H1 (cell line): ENCODE measurements at regions of chr16 and their contacts with region 1.

Region 1: DNA sequence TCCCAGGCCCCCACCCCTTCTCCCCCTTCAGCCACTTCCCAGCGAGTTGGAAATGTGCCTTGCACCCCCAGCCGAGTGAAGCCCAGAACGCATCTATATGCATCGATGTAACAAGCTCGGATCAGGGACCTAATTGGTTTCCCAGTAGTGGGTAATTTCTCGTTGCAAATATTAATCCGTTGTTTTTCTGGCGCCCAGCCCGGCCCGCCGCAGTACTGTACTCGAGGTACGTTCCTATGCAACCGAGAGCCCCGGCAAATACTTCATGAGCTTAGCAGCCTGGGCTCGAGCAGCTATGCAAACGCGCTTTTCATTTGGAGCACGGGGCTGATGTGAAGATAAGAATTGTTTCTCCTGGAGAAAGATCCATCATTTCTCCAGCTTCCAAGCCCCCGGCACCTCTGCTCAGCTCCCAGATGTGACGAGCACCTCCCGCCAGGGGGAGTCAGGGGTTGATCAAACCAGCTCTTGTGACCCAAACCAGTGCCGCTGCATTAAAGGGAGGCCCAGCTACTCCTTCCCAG is 229.8 kb downstream of the KATNIP start:
- DNase-seq: peak; percentile 41 to 88
- H3K4me3 ChIP-seq: no peak overlapping the region
- H3K27ac ChIP-seq: no peak overlapping the region
- H3K4me1 ChIP-seq: 0 out of 7 replicates have a peak, but pooled peaks cover 0 to 5% (median under 1%) of the 10 kb centered on the region in 4 experiments
- H3K27me3 ChIP-seq: no peaks in the 10 kb centered on the region
- CTCF ChIP-seq: peak; percentile 70 to 88 (median 81)
- EP300 ChIP-seq: no peak
- POLR2A ChIP-seq: no peak
- RAD21 ChIP-seq: peak; percentile 76 to 84

Region 2: GRCh38 chr16:27582883-27583282 is 196.8 kb before region 1 on chr16:
- CTCF ChIA-PET with region 1: no interaction called
- POLR2A ChIA-PET with region 1: no interaction called
- DNase-seq: no peak
- H3K4me3 ChIP-seq: no peak overlapping the region
- H3K27ac ChIP-seq: no peak overlapping the region
- H3K4me1 ChIP-seq: 0 out of 7 replicates have a peak, but pooled peaks cover 0 to 2% (median 0%) of the 10 kb centered on the region in 4 experiments
- H3K27me3 ChIP-seq: no peaks in the 10 kb centered on the region
- CTCF ChIP-seq: no peak
- EP300 ChIP-seq: no peak
- POLR2A ChIP-seq: no peak
- RAD21 ChIP-seq: no peak

Region 3: GRCh38 chr16:27698266-27698665 is 81.4 kb before region 1 on chr16:
- CTCF ChIA-PET with region 1: interaction called, 17 read pairs
- POLR2A ChIA-PET with region 1: no interaction called
- DNase-seq: peak; percentile 70 to 95
- H3K4me3 ChIP-seq: no peak overlapping the region
- H3K27ac ChIP-seq: no peak overlapping the region
- H3K4me1 ChIP-seq: peaks cover 0 to 11% (median 2%) of the 10 kb centered on the region in 4 experiments; a peak in 4 of 7 replicates
- H3K27me3 ChIP-seq: no peaks in the 10 kb centered on the region
- CTCF ChIP-seq: peak; percentile 97 to 98 (median 97)
- EP300 ChIP-seq: no peak
- POLR2A ChIP-seq: no peak
- RAD21 ChIP-seq: peak; percentile 68 to 81

Region 4: DNA sequence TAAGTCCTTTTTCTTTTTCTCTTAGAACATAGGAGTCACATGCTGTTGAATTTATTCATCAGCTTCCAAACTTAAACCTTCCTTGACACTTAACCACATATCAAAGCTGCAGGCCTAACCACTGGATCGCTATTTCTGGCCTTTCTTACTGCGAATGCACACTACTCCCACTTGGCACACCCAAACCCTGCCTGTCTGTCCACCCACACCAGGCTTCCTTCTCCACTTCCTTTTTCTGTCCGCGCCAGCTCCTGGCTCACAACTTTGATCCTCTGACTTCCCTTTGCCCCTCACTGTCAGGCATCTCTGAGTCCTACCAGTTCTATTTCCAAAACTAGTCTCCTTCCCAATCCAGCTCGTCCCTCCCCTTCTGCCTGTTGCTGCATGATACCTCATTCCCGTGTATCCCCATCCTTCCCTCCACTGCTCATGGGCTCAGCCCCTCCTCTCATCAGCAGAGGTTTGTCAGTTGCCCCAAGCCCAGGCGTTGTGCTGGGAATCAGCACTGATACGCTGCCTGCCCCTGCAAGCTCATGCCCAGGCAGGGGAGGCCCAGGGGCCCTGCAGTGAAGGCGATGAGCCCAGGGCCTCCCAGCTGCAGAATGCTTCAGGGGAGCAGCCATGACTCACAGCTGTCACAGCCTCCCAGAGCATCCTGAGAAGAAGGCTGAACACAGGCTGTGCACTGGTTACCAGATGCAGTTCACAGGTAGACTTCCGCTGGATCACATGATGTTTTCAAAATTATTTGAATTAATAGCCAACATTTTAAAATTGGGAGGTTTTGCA is 50.0 kb before region 1 on chr16:
- CTCF ChIA-PET with region 1: no interaction called
- POLR2A ChIA-PET with region 1: no interaction called
- DNase-seq: no peak
- H3K4me3 ChIP-seq: no peak overlapping the region
- H3K27ac ChIP-seq: no peak overlapping the region
- H3K4me1 ChIP-seq: no peaks in the 10 kb centered on the region
- H3K27me3 ChIP-seq: no peaks in the 10 kb centered on the region
- CTCF ChIP-seq: no peak
- EP300 ChIP-seq: no peak
- POLR2A ChIP-seq: no peak
- RAD21 ChIP-seq: no peak

Region 5: DNA sequence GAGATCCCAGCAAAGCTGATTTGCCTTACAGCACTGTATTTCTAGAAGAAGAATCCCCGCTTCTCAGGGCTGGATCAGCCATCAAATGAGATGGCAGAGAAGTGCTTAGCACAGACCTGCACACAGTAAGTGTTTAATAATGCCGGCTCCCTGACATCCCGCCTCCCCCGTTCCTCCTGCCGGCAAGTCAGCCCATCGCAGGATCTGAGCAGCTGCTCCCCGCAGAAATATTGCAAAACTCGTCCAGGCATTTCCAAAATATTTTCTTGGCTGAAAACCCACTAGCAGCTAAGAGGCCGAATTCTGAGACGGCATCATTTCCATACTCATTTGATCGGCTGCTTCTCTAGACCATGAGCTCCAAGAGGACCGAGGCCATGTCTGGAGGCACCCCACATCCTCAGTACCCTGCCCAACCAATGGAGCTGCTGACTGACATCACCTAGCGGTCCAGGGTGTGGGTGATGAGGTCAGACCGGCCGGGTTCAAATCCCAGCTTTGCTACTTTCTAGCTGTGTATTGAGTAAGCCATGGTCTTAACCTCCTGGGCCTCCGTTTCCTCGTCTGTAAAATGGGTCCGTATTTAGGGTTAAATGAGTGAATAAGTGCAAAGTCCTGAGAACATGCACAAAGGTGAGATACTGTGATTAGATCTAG is 21.7 kb after region 1 on chr16:
- CTCF ChIA-PET with region 1: interaction called, 11 read pairs
- POLR2A ChIA-PET with region 1: no interaction called
- DNase-seq: no peak
- H3K4me3 ChIP-seq: no peak overlapping the region
- H3K27ac ChIP-seq: no peak overlapping the region
- H3K4me1 ChIP-seq: peaks cover 0 to 4% (median 1%) of the 10 kb centered on the region in 4 experiments; a peak in 5 of 7 replicates
- H3K27me3 ChIP-seq: no peaks in the 10 kb centered on the region; a peak in 1 of 7 replicates
- CTCF ChIP-seq: no peak
- EP300 ChIP-seq: no peak
- POLR2A ChIP-seq: no peak
- RAD21 ChIP-seq: no peak

Region 6: GRCh38 chr16:27853101-27853500 is 73.4 kb after region 1 on chr16:
- CTCF ChIA-PET with region 1: interaction called, 24 read pairs
- POLR2A ChIA-PET with region 1: no interaction called
- DNase-seq: no peak
- H3K4me3 ChIP-seq: no peak overlapping the region
- H3K27ac ChIP-seq: no peak overlapping the region
- H3K4me1 ChIP-seq: peaks cover 0 to 2% (median 0%) of the 10 kb centered on the region in 4 experiments; a peak in 3 of 7 replicates
- H3K27me3 ChIP-seq: no peaks in the 10 kb centered on the region
- CTCF ChIP-seq: no peak
- EP300 ChIP-seq: no peak
- POLR2A ChIP-seq: no peak
- RAD21 ChIP-seq: no peak